Mammary epithelial cell (primary cell): ENCODE measurements at regions of chr12 and their contacts with region 1.

Region 1: GRCh38 chr12:94769776-94770759 is 119.7 kb upstream of the TMCC3 start:
- DNase-seq: no peak
- H3K4me3 ChIP-seq: no peak overlapping the region
- H3K27ac ChIP-seq: no peak overlapping the region
- H3K4me1 ChIP-seq: no peaks in the 10 kb centered on the region
- H3K27me3 ChIP-seq: peaks cover 2% of the 10 kb centered on the region
- CTCF ChIP-seq: no peak

Region 2: GRCh38 chr12:94795520-94795919 is 25.5 kb after region 1 on chr12:
- CTCF ChIA-PET with region 1: no interaction called
- dilution Hi-C with region 1: no loop called
- in situ Hi-C with region 1: no loop called
- intact Hi-C with region 1: loop called (anchors 2 kb)
- DNase-seq: peak; percentile 64
- H3K4me3 ChIP-seq: no peak overlapping the region
- H3K27ac ChIP-seq: no peak overlapping the region
- H3K4me1 ChIP-seq: peaks cover 31% of the 10 kb centered on the region
- H3K27me3 ChIP-seq: no peaks in the 10 kb centered on the region
- CTCF ChIP-seq: peak in 1 of 2 donors; percentile 40